ENCODE measurements at regions of chr12 and their contacts with region 1.

Region 1: GRCh38 chr12:105319691-105320209 is 10.7 kb upstream of the C12orf75 start:
- DNase-seq: no peak
- ATAC-seq: no peak
- H3K4me3 ChIP-seq: no peak overlapping the region
- H3K27ac ChIP-seq: no peak overlapping the region
- H3K4me1 ChIP-seq: peaks cover 4 to 17% of the 10 kb centered on the region in 2 donors
- H3K27me3 ChIP-seq: no peaks in the 10 kb centered on the region
- CTCF ChIP-seq: no peak
- POLR2A ChIP-seq: no peak

Region 2: GRCh38 chr12:105279460-105280056 is 40.2 kb before region 1 on chr12:
- in situ Hi-C with region 1: no loop called
- intact Hi-C with region 1: loop called (anchors 5 kb)
- DNase-seq: peak in 1 of 2 donors; percentile 12
- ATAC-seq: peak; percentile 51 to 55
- H3K4me3 ChIP-seq: no peak overlapping the region
- H3K27ac ChIP-seq: no peak overlapping the region
- H3K4me1 ChIP-seq: no peaks in the 10 kb centered on the region
- H3K27me3 ChIP-seq: no peaks in the 10 kb centered on the region
- CTCF ChIP-seq: peak; percentile 36 to 67 (median 61)
- POLR2A ChIP-seq: no peak